ENCODE measurements at regions of chr12 and their contacts with region 1.

Region 1: DNA sequence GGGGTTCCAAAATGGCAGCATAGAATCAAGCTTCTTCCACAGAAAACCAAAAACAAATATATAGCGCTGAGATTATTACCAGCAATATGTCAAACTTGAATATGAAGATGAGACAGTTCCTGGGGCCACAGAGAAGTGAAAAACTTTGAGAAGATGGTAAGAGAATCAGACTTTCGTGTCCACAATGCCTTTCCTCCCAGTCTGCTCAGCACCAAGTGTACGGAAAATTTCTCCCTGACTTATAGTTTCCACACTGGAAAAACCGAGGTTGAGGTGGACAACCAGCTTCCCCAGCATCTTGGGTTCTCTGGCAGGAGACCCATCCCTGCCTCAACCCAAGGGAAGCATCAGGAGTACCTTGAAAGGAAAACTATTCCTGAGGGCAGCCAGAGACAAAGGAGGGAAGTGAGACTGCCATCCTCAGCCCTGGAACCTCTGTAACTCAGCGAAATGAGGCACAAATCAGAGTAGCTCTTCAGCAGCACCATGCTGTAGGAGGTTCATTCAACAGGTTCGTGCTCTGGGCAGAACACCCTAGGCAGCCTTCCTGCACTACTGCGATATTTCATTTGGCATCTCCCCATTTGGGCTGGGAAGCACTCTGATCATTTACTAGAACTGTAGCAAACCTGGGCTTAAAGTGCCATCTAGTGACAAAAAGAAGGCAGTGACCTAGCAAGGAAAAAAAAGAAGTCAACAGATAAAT is 52.4 kb upstream of the CAPRIN2 start:
- DNase-seq: peak in 6 of 35 experiments; percentile 8 to 75 (median 20)
- ATAC-seq: peak in 3 of 4 experiments; percentile 50 to 62 (median 60)
- H3K4me3 ChIP-seq: no peak overlapping the region
- H3K4me3 Mint-ChIP-seq: no peak overlapping the region
- H3K27ac ChIP-seq: no peak overlapping the region
- H3K27ac Mint-ChIP-seq: no peak overlapping the region
- H3K4me1 ChIP-seq: no peaks in the 10 kb centered on the region
- H3K4me1 Mint-ChIP-seq: no peaks in the 10 kb centered on the region
- H3K27me3 ChIP-seq: peaks cover 0 to 2% of the 10 kb centered on the region in 2 experiments
- H3K27me3 Mint-ChIP-seq: peaks cover 18% of the 10 kb centered on the region in 2 donors

Region 2: GRCh38 chr12:29552324-29552927 is 1254.7 kb before region 1 on chr12:
- CTCF ChIA-PET with region 1: interaction called, 9 to 11 read pairs
- POLR2A ChIA-PET with region 1: no interaction called
- DNase-seq: peak in 34 of 35 experiments; percentile 4 to 70 (median 44)
- ATAC-seq: peak; percentile 61 to 71 (median 62)
- H3K4me3 ChIP-seq: no peak overlapping the region
- H3K4me3 Mint-ChIP-seq: no peak overlapping the region
- H3K27ac ChIP-seq: no peak overlapping the region
- H3K27ac Mint-ChIP-seq: no peak overlapping the region
- H3K4me1 ChIP-seq: no peaks in the 10 kb centered on the region
- H3K4me1 Mint-ChIP-seq: no peaks in the 10 kb centered on the region
- H3K27me3 ChIP-seq: peaks cover 0 to 3% of the 10 kb centered on the region in 2 experiments
- H3K27me3 Mint-ChIP-seq: peaks cover 0 to 11% of the 10 kb centered on the region in 2 donors